ENCODE measurements at regions of chr15 and their contacts with region 1.

Region 1: GRCh38 chr15:90571063-90571541 is 41.4 kb downstream of the CRTC3 start:
- DNase-seq: no peak
- H3K4me3 Mint-ChIP-seq: no peak overlapping the region
- H3K27ac Mint-ChIP-seq: peak overlapping the region; percentile 37
- H3K4me1 Mint-ChIP-seq: peaks cover 83% of the 10 kb centered on the region
- H3K27me3 Mint-ChIP-seq: no peaks in the 10 kb centered on the region

Region 2: DNA sequence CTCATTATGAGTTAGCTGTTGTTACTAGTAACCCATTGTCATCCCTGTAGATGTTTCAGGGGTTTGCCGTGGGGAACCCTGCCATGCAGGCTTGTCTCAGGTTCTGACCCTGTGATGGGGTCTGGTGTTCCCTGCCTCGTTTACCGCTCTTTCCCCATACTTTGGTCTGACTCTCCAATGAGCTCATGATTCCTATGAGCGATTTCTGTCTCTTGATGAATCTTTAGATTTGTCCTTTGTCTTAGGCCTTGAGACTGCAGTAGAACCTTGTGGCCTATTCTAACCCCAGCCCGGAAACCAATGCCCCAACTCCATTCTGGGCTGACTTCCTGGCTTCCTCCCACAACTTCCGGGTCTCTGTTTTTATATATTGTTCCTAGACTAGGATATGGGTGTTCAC is 194.3 kb before region 1 on chr15:
- CTCF ChIA-PET with region 1: no interaction called
- POLR2A ChIA-PET with region 1: no interaction called
- DNase-seq: peak; percentile 85
- H3K4me3 Mint-ChIP-seq: peak overlapping the region; percentile 23
- H3K27ac Mint-ChIP-seq: peak overlapping the region; percentile 86
- H3K4me1 Mint-ChIP-seq: peaks cover 46% of the 10 kb centered on the region
- H3K27me3 Mint-ChIP-seq: no peaks in the 10 kb centered on the region

Region 3: GRCh38 chr15:90539789-90540188 is 31.3 kb before region 1 on chr15:
- CTCF ChIA-PET with region 1: interaction called, 3 read pairs
- POLR2A ChIA-PET with region 1: interaction called, 13 read pairs
- DNase-seq: no peak
- H3K4me3 Mint-ChIP-seq: peak overlapping the region; percentile 84
- H3K27ac Mint-ChIP-seq: peak overlapping the region; percentile 95
- H3K4me1 Mint-ChIP-seq: peaks cover 69% of the 10 kb centered on the region
- H3K27me3 Mint-ChIP-seq: no peaks in the 10 kb centered on the region

Region 4: GRCh38 chr15:90560229-90560776 is 10.8 kb before region 1 on chr15:
- CTCF ChIA-PET with region 1: interaction called, 9 read pairs
- POLR2A ChIA-PET with region 1: interaction called, 12 read pairs
- DNase-seq: no peak
- H3K4me3 Mint-ChIP-seq: no peak overlapping the region
- H3K27ac Mint-ChIP-seq: peak overlapping the region; percentile 42
- H3K4me1 Mint-ChIP-seq: peaks cover 80% of the 10 kb centered on the region
- H3K27me3 Mint-ChIP-seq: no peaks in the 10 kb centered on the region

Region 5: GRCh38 chr15:90583471-90584252 is 12.6 kb after region 1 on chr15:
- CTCF ChIA-PET with region 1: interaction called, 8 read pairs
- POLR2A ChIA-PET with region 1: interaction called, 27 read pairs
- DNase-seq: no peak
- H3K4me3 Mint-ChIP-seq: no peak overlapping the region
- H3K27ac Mint-ChIP-seq: no peak overlapping the region
- H3K4me1 Mint-ChIP-seq: peaks cover 46% of the 10 kb centered on the region
- H3K27me3 Mint-ChIP-seq: no peaks in the 10 kb centered on the region

Measured in activated CD4-positive, alpha-beta memory T cell treated with anti-CD3 and anti-CD28 coated beads, Interleukin-2, amount 10 ng/mL, durations not matched to agents 7 days and 5 days (primary cell).